ENCODE measurements at regions of chr4 and their contacts with region 1.

Region 1: DNA sequence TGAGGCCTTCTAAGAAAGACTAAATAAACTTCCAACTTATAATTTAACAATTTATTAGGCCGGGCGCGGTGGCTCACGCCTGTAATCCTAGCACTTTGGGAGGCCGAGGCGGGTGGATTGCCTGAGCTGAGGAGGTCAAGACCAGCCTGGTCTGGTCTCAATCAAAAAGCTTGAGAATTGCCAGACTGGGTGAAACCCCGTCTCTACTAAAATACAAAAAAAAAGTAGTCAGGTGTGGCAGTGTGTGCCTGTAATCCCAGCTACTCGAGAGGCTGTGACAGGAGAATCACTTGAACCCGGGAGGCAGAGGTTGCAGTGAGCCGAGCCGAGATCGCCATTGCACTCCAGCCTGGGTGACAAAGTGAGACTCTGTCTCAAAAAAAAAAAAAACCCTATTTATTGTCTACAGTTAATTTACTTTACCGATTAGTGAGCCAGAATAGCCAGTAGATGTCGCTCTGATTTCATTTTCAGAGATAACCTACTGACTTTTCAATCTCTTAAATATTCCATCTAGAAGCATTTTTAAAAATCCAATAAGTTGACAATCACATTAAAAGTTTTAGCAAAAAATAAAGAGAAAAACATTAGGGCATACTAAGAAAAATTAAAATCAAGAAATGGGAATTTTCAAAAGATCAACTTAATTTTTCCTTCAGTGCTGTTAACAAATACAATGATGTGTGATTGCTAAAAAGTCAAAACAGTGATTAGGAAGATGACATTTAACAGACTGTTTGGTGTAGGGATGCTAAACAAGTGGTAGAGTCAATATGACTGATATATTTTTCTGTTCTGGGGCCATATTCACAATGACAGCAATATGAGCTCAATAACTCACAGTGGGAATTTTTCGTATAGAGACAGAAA is 4.3 kb upstream of the SHROOM3 start:
- DNase-seq: no peak
- H3K4me3 Mint-ChIP-seq: no peak overlapping the region
- H3K27ac Mint-ChIP-seq: no peak overlapping the region
- H3K4me1 Mint-ChIP-seq: no peaks in the 10 kb centered on the region
- H3K27me3 Mint-ChIP-seq: peaks cover 20% of the 10 kb centered on the region

Region 2: GRCh38 chr4:76377911-76378310 is 52.8 kb before region 1 on chr4:
- CTCF ChIA-PET with region 1: interaction called, 11 read pairs
- POLR2A ChIA-PET with region 1: no interaction called
- intact Hi-C with region 1: no loop called
- DNase-seq: peak; percentile 64
- H3K4me3 Mint-ChIP-seq: no peak overlapping the region
- H3K27ac Mint-ChIP-seq: no peak overlapping the region
- H3K4me1 Mint-ChIP-seq: no peaks in the 10 kb centered on the region
- H3K27me3 Mint-ChIP-seq: no peaks in the 10 kb centered on the region

Region 3: GRCh38 chr4:76420188-76420761 is 10.5 kb before region 1 on chr4:
- CTCF ChIA-PET with region 1: interaction called, 12 read pairs
- POLR2A ChIA-PET with region 1: no interaction called
- intact Hi-C with region 1: no loop called
- DNase-seq: no peak
- H3K4me3 Mint-ChIP-seq: peak overlapping the region; percentile 37
- H3K27ac Mint-ChIP-seq: no peak overlapping the region
- H3K4me1 Mint-ChIP-seq: peaks cover 5% of the 10 kb centered on the region
- H3K27me3 Mint-ChIP-seq: peaks cover 25% of the 10 kb centered on the region

Region 4: GRCh38 chr4:76459291-76459723 is 28.6 kb after region 1 on chr4:
- CTCF ChIA-PET with region 1: no interaction called
- POLR2A ChIA-PET with region 1: no interaction called
- intact Hi-C with region 1: no loop called
- DNase-seq: no peak
- H3K4me3 Mint-ChIP-seq: no peak overlapping the region
- H3K27ac Mint-ChIP-seq: no peak overlapping the region
- H3K4me1 Mint-ChIP-seq: no peaks in the 10 kb centered on the region
- H3K27me3 Mint-ChIP-seq: no peaks in the 10 kb centered on the region

Region 5: DNA sequence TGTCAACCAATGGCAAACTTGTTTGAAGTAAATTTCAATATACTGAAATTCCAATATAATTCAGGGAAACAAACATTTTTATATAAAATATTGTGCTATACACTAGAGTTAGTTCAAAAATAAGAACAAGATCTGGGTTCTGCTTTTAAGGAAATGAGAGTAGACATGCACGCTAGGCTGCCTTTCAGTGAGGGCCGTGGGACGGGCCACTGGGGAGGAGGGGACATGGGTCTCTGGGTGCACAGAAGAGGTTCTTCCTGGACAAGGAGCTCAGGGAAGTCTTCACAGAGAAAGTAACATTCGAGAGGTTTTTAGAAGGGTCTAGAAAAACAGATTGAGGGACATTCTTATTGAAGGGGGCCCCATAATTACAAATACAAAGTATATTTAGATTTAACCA is 68.7 kb after region 1 on chr4:
- CTCF ChIA-PET with region 1: interaction called, 75 read pairs
- POLR2A ChIA-PET with region 1: no interaction called
- intact Hi-C with region 1: no loop called
- DNase-seq: no peak
- H3K4me3 Mint-ChIP-seq: no peak overlapping the region
- H3K27ac Mint-ChIP-seq: no peak overlapping the region
- H3K4me1 Mint-ChIP-seq: no peaks in the 10 kb centered on the region
- H3K27me3 Mint-ChIP-seq: peaks cover 3% of the 10 kb centered on the region

Region 6: GRCh38 chr4:76504613-76505465 is 74.1 kb after region 1 on chr4:
- CTCF ChIA-PET with region 1: interaction called, 75 read pairs
- POLR2A ChIA-PET with region 1: no interaction called
- intact Hi-C with region 1: loop called (anchors 1 kb)
- DNase-seq: no peak
- H3K4me3 Mint-ChIP-seq: no peak overlapping the region
- H3K27ac Mint-ChIP-seq: no peak overlapping the region
- H3K4me1 Mint-ChIP-seq: no peaks in the 10 kb centered on the region
- H3K27me3 Mint-ChIP-seq: peaks cover 4% of the 10 kb centered on the region

Region 7: DNA sequence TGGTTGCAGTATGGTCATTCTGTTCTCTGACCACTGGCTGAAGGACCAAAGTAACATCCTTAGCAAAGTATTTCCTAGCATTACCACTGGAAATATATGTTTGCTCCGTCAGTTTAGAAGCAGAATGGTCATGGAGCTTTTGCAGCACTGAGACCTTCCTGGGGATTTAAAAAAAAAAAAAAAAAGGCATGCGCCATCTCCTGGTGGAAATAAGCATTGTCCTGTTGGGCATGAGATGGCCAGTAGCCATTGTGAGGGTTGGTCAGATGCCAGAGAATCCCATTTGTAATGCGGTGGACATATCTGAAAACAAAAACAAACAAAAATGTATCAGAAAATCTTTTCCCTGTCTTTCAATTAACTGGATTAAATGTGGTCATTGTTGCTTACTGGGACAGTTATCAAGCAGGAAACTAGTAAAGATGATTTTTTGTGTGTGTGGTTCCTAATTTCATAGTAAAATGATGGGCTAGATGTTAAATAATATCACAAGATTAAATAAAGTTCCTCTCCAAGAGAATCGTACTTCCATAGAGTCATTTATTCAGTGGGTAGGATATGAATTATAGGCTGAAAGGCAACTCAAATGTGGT is 327.6 kb after region 1 on chr4:
- CTCF ChIA-PET with region 1: interaction called, 10 read pairs
- POLR2A ChIA-PET with region 1: no interaction called
- intact Hi-C with region 1: loop called (anchors 5 kb)
- DNase-seq: no peak
- H3K4me3 Mint-ChIP-seq: no peak overlapping the region
- H3K27ac Mint-ChIP-seq: no peak overlapping the region
- H3K4me1 Mint-ChIP-seq: peaks cover 11% of the 10 kb centered on the region
- H3K27me3 Mint-ChIP-seq: peaks cover 7% of the 10 kb centered on the region

Region 8: DNA sequence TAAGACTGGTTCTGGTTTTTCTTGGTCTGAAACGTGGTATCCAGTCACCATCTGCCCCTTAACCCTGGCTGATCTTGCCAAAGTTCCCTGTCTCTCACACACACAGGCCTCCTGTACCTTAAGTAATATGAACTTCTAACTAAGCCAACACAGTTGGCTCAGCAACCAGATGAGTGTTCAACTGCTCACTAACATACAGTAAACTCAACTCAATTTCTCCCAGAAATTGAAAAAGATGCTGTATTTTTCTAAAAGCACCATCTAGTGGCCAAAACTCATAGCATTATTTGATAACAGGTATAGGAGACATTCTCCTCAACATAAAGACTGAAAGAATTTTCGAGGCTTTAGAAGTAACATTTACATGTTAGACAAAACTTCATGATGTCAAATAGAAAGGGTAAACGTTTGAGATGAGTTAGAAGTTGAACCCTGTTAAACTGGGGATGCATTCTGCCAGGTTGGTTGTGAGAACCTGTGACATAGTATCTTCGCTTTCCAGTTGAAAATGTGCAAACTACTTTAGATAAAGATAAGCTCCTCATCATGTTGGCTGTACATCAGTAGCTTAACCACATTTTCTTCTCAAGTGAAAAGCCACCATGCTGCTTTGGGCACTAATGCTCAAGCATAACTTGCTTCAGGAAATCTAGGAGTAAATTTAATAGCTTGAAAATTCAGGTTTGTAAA is 613.9 kb after region 1 on chr4:
- CTCF ChIA-PET with region 1: interaction called, 9 read pairs
- POLR2A ChIA-PET with region 1: no interaction called
- intact Hi-C with region 1: loop called (anchors 2 kb)
- DNase-seq: no peak
- H3K4me3 Mint-ChIP-seq: no peak overlapping the region
- H3K27ac Mint-ChIP-seq: no peak overlapping the region
- H3K4me1 Mint-ChIP-seq: peaks cover 8% of the 10 kb centered on the region
- H3K27me3 Mint-ChIP-seq: no peaks in the 10 kb centered on the region

Measured in activated CD4-positive, alpha-beta memory T cell treated with anti-CD3 and anti-CD28 coated beads for 36 hours (primary cell).